CD4-positive, alpha-beta T cell (primary cell): ENCODE measurements at regions of chr3 and their contacts with region 1.

Region 1: DNA sequence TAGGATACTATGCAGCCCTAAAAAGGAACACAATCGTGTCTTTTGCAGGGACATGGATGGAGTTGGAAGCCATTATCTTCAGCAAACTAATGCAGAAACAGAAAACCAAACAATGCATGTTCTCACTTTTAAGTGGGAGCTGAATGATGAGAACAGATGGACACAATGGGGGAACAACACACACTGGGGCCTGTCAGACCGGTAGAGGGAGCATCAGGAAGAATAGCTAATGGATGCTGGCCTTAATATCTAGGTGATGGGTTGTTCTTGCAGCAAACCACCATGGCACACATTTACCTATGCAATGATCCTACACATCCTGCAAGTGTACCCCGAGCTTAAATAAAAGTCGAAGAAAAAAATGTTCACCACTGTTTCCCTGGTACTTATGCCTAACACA is 17.5 kb downstream of the SENP7 start:
- DNase-seq: no peak
- ATAC-seq: no peak
- H3K4me3 ChIP-seq: no peak overlapping the region
- H3K4me3 Mint-ChIP-seq: no peak overlapping the region
- H3K27ac ChIP-seq: no peak overlapping the region
- H3K27ac Mint-ChIP-seq: peak overlapping the region; percentile 40
- H3K4me1 ChIP-seq: peaks cover 3% of the 10 kb centered on the region
- H3K4me1 Mint-ChIP-seq: peaks cover 68% of the 10 kb centered on the region
- H3K27me3 ChIP-seq: no peaks in the 10 kb centered on the region
- H3K27me3 Mint-ChIP-seq: no peaks in the 10 kb centered on the region
- CTCF ChIP-seq: no peak

Region 2: GRCh38 chr3:100419406-100419805 is 1076.1 kb before region 1 on chr3:
- CTCF ChIA-PET with region 1: no interaction called
- POLR2A ChIA-PET with region 1: no interaction called
- intact Hi-C with region 1: no loop called
- DNase-seq: peak in 1 of 14 experiments; percentile 4
- ATAC-seq: no peak
- H3K4me3 ChIP-seq: no peak overlapping the region
- H3K4me3 Mint-ChIP-seq: no peak overlapping the region
- H3K27ac ChIP-seq: no peak overlapping the region
- H3K27ac Mint-ChIP-seq: no peak overlapping the region
- H3K4me1 ChIP-seq: no peaks in the 10 kb centered on the region
- H3K4me1 Mint-ChIP-seq: no peaks in the 10 kb centered on the region
- H3K27me3 ChIP-seq: no peaks in the 10 kb centered on the region
- H3K27me3 Mint-ChIP-seq: peaks cover 11% of the 10 kb centered on the region
- CTCF ChIP-seq: no peak

Region 3: GRCh38 chr3:101453961-101454360 is 41.6 kb before region 1 on chr3:
- CTCF ChIA-PET with region 1: no interaction called
- POLR2A ChIA-PET with region 1: no interaction called
- intact Hi-C with region 1: no loop called
- DNase-seq: no peak
- ATAC-seq: no peak
- H3K4me3 ChIP-seq: no peak overlapping the region
- H3K4me3 Mint-ChIP-seq: no peak overlapping the region
- H3K27ac ChIP-seq: no peak overlapping the region
- H3K27ac Mint-ChIP-seq: peak overlapping the region; percentile 16
- H3K4me1 ChIP-seq: no peaks in the 10 kb centered on the region
- H3K4me1 Mint-ChIP-seq: peaks cover 42% of the 10 kb centered on the region
- H3K27me3 ChIP-seq: no peaks in the 10 kb centered on the region
- H3K27me3 Mint-ChIP-seq: no peaks in the 10 kb centered on the region
- CTCF ChIP-seq: no peak

Region 4: DNA sequence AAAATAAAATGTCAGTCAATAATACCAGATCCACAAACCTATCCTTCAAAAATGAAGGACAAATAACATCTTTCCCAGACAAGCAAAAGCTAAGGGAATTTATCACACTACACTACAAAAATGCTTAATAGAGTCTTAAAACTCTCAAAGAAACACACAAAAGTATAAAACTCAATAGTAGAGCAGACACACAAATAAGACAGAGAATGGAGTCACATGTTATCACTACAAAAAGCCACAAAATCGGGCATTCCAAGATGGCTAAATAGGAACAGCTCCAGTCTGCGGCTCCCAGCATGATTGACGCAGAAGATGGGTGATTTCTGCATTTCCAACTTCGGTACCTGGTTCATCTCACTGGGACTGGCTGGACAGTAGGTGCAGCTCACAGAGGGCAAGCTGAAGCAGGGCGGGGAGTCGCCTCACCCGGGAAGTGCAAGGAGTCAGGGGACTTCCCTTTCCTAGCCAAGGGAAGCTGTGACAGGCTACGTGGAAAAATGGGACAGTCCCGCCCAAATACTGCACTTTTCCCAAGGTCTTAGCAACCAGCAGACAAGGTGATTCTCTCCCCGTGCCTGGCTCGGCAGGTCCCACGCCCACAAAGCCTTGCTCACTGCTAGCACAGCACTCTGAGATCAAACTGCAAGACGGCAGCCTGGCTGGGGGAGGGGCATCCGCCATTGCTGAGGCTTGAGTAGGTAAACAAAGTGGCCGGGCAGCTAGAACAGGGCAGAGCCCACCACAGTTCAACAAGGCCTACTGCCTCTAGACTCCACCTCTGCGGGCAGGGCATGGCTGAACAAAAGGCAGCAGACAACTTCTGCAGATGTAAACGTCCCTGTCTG is 28.9 kb before region 1 on chr3:
- CTCF ChIA-PET with region 1: no interaction called
- POLR2A ChIA-PET with region 1: interaction called, 3 read pairs
- intact Hi-C with region 1: loop called in 1 of 2 experiments (anchors 5 kb)
- DNase-seq: peak in 8 of 14 experiments; percentile 47 to 75 (median 68)
- ATAC-seq: peak; percentile 79
- H3K4me3 ChIP-seq: peak overlapping the region; percentile 48
- H3K4me3 Mint-ChIP-seq: peak overlapping the region; percentile 83
- H3K27ac ChIP-seq: peak overlapping the region; percentile 13 to 64
- H3K27ac Mint-ChIP-seq: peak overlapping the region; percentile 89
- H3K4me1 ChIP-seq: peaks cover 19% of the 10 kb centered on the region
- H3K4me1 Mint-ChIP-seq: peaks cover 77% of the 10 kb centered on the region
- H3K27me3 ChIP-seq: no peaks in the 10 kb centered on the region
- H3K27me3 Mint-ChIP-seq: no peaks in the 10 kb centered on the region
- CTCF ChIP-seq: no peak

Region 5: GRCh38 chr3:102444101-102444500 is 948.5 kb after region 1 on chr3:
- CTCF ChIA-PET with region 1: no interaction called
- POLR2A ChIA-PET with region 1: no interaction called
- intact Hi-C with region 1: no loop called
- DNase-seq: no peak
- ATAC-seq: no peak
- H3K4me3 ChIP-seq: no peak overlapping the region
- H3K4me3 Mint-ChIP-seq: no peak overlapping the region
- H3K27ac ChIP-seq: no peak overlapping the region
- H3K27ac Mint-ChIP-seq: no peak overlapping the region
- H3K4me1 ChIP-seq: no peaks in the 10 kb centered on the region
- H3K4me1 Mint-ChIP-seq: no peaks in the 10 kb centered on the region
- H3K27me3 ChIP-seq: peaks cover 5 to 6% of the 10 kb centered on the region in 2 experiments
- H3K27me3 Mint-ChIP-seq: peaks cover 10% of the 10 kb centered on the region
- CTCF ChIP-seq: no peak